Activated CD8-positive, alpha-beta memory T cell treated with anti-CD3 and anti-CD28 coated beads, Interleukin-2, amount 10 ng/mL, durations not matched to agents 7 days and 5 days (primary cell): ENCODE measurements at regions of chr10 and their contacts with region 1.

Region 1: GRCh38 chr10:88687853-88688467 is 18.1 kb upstream of the LIPK start:
- DNase-seq: no peak
- ATAC-seq: no peak
- H3K4me3 Mint-ChIP-seq: no peak overlapping the region
- H3K27ac Mint-ChIP-seq: no peak overlapping the region
- H3K4me1 Mint-ChIP-seq: no peaks in the 10 kb centered on the region
- H3K27me3 Mint-ChIP-seq: peaks cover 8% of the 10 kb centered on the region

Region 2: GRCh38 chr10:88541116-88541626 is 146.8 kb before region 1 on chr10:
- CTCF ChIA-PET with region 1: no interaction called
- DNase-seq: no peak
- ATAC-seq: no peak
- H3K4me3 Mint-ChIP-seq: no peak overlapping the region
- H3K27ac Mint-ChIP-seq: no peak overlapping the region
- H3K4me1 Mint-ChIP-seq: peaks cover 3% of the 10 kb centered on the region
- H3K27me3 Mint-ChIP-seq: no peaks in the 10 kb centered on the region

Region 3: DNA sequence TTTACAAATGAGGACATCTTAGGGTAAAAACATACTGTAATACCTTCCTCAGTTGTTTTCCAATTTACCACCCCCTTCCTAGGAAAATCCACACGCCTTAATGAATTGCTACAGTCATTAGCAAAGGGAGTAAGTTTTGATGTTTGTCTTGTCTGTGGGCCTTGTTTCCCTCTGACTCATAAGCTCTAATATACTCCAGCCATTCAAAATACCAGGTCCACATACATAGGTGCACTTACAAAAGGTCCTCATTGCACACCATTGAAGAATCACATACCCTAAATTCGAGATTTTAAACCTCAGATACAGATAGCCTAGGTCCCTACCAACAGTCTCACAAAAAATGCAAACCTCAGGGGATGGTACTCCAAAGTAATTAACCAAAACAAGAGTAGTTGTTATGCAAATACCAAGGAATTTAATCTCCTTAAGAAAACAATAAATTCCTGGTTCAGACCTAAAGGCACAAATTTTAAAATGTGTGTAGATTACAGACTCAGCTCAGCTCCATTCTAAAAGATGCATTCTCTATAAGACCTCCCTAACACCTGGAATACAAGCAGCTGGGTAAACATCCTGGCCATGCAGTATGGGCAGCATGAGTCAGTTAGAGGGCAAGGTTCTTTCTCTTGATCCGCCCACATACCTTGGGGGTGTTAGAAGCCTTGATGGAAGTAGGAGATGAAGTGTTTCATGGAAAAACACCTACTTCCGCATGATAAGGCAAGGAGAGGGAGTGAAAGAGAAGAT is 15.1 kb after region 1 on chr10:
- CTCF ChIA-PET with region 1: no interaction called
- DNase-seq: no peak
- ATAC-seq: no peak
- H3K4me3 Mint-ChIP-seq: no peak overlapping the region
- H3K27ac Mint-ChIP-seq: no peak overlapping the region
- H3K4me1 Mint-ChIP-seq: no peaks in the 10 kb centered on the region
- H3K27me3 Mint-ChIP-seq: peaks cover 10% of the 10 kb centered on the region

Region 4: DNA sequence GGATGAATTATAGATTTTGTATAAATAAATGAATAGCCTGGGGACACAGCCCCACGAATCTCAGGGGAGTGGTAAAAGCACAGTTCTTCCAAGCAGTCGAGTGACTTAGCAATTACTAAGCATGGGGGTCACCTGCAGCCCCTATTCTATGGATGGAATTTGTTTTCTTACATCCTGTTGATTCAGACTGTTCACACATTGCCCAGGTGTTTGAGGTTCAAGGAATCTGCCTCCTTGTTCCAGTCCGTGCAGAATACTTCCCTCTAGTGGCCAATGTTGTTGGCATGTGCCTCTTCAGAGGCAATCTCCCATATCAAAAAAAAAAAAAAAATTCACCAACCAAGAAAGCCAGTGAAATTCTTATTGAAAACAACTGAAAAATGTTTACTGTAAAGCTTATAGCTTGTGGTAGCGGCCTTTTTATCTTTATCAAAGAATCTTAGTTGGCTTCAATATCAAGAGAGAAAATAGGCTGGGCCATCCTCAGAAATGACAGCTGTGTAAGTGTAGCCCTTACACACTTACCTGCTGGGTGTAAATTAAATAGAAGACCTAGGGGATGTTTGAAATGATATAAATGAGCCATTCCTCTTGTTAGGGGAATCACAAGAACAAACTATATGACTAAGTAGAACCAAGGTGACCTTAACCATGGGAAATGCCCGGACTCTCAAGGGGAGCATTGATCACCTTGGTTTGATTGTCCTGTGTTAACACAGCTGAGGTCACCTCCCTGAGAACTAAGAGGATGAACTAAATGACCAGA is 122.4 kb after region 1 on chr10:
- CTCF ChIA-PET with region 1: interaction called, 24 read pairs
- DNase-seq: no peak
- ATAC-seq: peak; percentile 68
- H3K4me3 Mint-ChIP-seq: no peak overlapping the region
- H3K27ac Mint-ChIP-seq: no peak overlapping the region
- H3K4me1 Mint-ChIP-seq: peaks cover 5% of the 10 kb centered on the region
- H3K27me3 Mint-ChIP-seq: no peaks in the 10 kb centered on the region